Gastrocnemius medialis (tissue), 4 donors: ENCODE measurements at regions of chr9 and their contacts with region 1.

Region 1: GRCh38 chr9:25804856-25805255 is 126.6 kb upstream of the TUSC1 start:
- DNase-seq: no peak
- ATAC-seq: no peak
- H3K4me3 ChIP-seq: no peak overlapping the region
- H3K27ac ChIP-seq: no peak overlapping the region
- H3K4me1 ChIP-seq: no peaks in the 10 kb centered on the region
- H3K27me3 ChIP-seq: no peaks in the 10 kb centered on the region
- CTCF ChIP-seq: no peak
- POLR2A ChIP-seq: no peak

Region 2: GRCh38 chr9:25613704-25614103 is 191.2 kb before region 1 on chr9:
- in situ Hi-C with region 1: no loop called
- intact Hi-C with region 1: no loop called
- DNase-seq: no peak
- ATAC-seq: no peak
- H3K4me3 ChIP-seq: no peak overlapping the region
- H3K27ac ChIP-seq: no peak overlapping the region
- H3K4me1 ChIP-seq: no peaks in the 10 kb centered on the region
- H3K27me3 ChIP-seq: no peaks in the 10 kb centered on the region
- CTCF ChIP-seq: no peak
- POLR2A ChIP-seq: no peak

Region 3: GRCh38 chr9:25716220-25716872 is 88.5 kb before region 1 on chr9:
- in situ Hi-C with region 1: loop called in 1 of 4 experiments (anchors 25 kb)
- intact Hi-C with region 1: no loop called
- DNase-seq: no peak
- ATAC-seq: no peak
- H3K4me3 ChIP-seq: no peak overlapping the region
- H3K27ac ChIP-seq: no peak overlapping the region
- H3K4me1 ChIP-seq: no peaks in the 10 kb centered on the region
- H3K27me3 ChIP-seq: no peaks in the 10 kb centered on the region
- CTCF ChIP-seq: no peak
- POLR2A ChIP-seq: no peak

Region 4: DNA sequence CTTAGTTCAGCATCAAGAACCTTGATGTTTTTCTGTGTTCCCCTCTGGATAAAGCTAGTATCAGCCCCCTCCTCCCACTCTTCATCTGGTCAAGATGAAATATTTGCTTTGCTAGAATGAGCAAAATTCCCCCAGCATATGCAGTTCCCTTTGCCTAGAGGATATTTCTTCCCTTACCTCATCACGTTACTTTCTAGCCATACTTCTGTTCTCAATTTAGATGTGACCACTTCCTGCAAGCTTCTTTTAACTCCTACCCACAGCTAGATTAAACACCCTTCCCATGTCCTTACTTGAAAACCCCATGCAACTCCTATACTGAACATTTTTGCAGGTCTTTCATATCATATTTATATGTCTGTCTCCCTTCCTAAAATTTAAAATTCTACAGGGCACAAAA is 52.3 kb after region 1 on chr9:
- in situ Hi-C with region 1: no loop called
- intact Hi-C with region 1: no loop called
- DNase-seq: no peak
- ATAC-seq: no peak
- H3K4me3 ChIP-seq: no peak overlapping the region
- H3K27ac ChIP-seq: no peak overlapping the region
- H3K4me1 ChIP-seq: no peaks in the 10 kb centered on the region
- H3K27me3 ChIP-seq: no peaks in the 10 kb centered on the region
- CTCF ChIP-seq: no peak
- POLR2A ChIP-seq: no peak

Region 5: GRCh38 chr9:25917593-25918426 is 113.0 kb after region 1 on chr9:
- in situ Hi-C with region 1: loop called in 1 of 4 experiments (anchors 25 kb)
- intact Hi-C with region 1: no loop called
- DNase-seq: no peak
- ATAC-seq: no peak
- H3K4me3 ChIP-seq: no peak overlapping the region
- H3K27ac ChIP-seq: no peak overlapping the region
- H3K4me1 ChIP-seq: no peaks in the 10 kb centered on the region
- H3K27me3 ChIP-seq: no peaks in the 10 kb centered on the region
- CTCF ChIP-seq: no peak
- POLR2A ChIP-seq: no peak